Activated B cell treated with CpG ODN at 0.5 μM for 24 hours (primary cell): ENCODE measurements at regions of chr17 and their contacts with region 1.

Region 1: GRCh38 chr17:47009759-47010594 is 30.9 kb upstream of the RPRML start:
- DNase-seq: no peak
- ATAC-seq: no peak
- H3K4me3 Mint-ChIP-seq: no peak overlapping the region
- H3K27ac Mint-ChIP-seq: no peak overlapping the region
- H3K4me1 Mint-ChIP-seq: peaks cover 10% of the 10 kb centered on the region
- H3K27me3 Mint-ChIP-seq: no peaks in the 10 kb centered on the region
- CTCF ChIP-seq: no peak

Region 2: GRCh38 chr17:46964315-46965253 is 45.4 kb before region 1 on chr17:
- CTCF ChIA-PET with region 1: no interaction called
- POLR2A ChIA-PET with region 1: no interaction called
- intact Hi-C with region 1: no loop called
- DNase-seq: no peak
- ATAC-seq: no peak
- H3K4me3 Mint-ChIP-seq: no peak overlapping the region
- H3K27ac Mint-ChIP-seq: no peak overlapping the region
- H3K4me1 Mint-ChIP-seq: no peaks in the 10 kb centered on the region
- H3K27me3 Mint-ChIP-seq: peaks cover 1% of the 10 kb centered on the region
- CTCF ChIP-seq: no peak

Region 3: GRCh38 chr17:46995841-46996571 is 14.0 kb before region 1 on chr17:
- CTCF ChIA-PET with region 1: no interaction called
- POLR2A ChIA-PET with region 1: no interaction called
- intact Hi-C with region 1: loop called (anchors 1 kb)
- DNase-seq: no peak
- ATAC-seq: no peak
- H3K4me3 Mint-ChIP-seq: no peak overlapping the region
- H3K27ac Mint-ChIP-seq: no peak overlapping the region
- H3K4me1 Mint-ChIP-seq: peaks cover 34% of the 10 kb centered on the region
- H3K27me3 Mint-ChIP-seq: no peaks in the 10 kb centered on the region
- CTCF ChIP-seq: no peak

Region 4: DNA sequence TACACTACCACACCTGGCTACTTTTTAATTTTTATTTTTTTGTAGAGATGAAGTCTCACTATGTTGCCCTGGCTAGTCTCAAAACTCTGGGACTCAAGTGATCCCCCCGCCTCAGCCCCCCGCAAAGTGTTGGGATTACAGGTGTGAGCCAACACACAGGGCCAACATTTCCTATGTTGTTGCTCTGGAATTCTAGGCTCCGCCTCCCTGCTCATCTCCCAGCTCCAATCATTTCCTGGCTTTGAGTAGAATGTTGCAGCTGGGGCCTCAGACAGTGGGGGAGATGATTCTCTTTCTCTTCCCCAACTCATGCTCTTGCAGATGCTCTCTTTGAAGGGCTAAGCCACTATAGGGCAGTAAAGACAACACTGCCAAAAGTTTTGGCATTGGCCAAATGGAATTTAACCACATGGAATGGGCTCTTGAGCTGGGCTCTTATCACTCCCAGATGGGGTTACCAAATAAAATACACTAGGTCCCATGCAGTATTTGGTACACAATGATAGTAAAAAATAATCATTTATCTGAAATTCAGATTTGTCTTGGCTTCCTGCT is 294.1 kb after region 1 on chr17:
- CTCF ChIA-PET with region 1: no interaction called
- POLR2A ChIA-PET with region 1: interaction called, 10 read pairs
- intact Hi-C with region 1: no loop called
- DNase-seq: no peak
- ATAC-seq: no peak
- H3K4me3 Mint-ChIP-seq: no peak overlapping the region
- H3K27ac Mint-ChIP-seq: no peak overlapping the region
- H3K4me1 Mint-ChIP-seq: peaks cover 11% of the 10 kb centered on the region
- H3K27me3 Mint-ChIP-seq: no peaks in the 10 kb centered on the region
- CTCF ChIP-seq: no peak

Region 5: DNA sequence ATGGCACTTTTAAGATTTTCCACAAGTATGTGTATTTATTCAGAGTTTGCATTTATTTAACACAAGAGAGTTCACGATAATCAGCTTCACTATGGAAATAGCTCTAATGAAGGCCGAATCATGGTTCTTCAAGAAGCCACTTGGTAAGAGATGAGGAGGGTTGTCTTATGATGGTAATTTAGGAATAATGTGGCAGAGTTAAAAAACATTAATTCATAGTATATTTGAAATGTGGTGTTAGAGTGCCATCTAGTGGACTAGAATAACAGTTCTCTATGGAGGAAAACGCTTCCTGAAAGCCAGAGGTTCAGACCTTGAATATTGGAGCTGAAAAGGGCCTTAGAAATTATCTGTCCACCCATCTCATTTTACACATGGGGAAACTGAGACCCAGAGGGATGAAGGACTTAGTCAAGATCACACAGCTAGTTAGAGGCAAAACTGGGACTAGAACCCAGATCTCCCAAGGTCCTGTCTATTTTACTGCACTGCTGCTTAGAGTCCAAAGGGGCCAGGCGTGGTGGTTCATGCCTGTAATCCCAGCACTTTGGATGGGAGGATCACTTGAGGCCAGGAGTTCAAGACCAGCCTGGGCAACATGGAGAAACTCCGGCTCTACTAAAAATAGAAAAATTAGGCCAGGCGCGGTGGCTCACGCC is 605.9 kb after region 1 on chr17:
- CTCF ChIA-PET with region 1: no interaction called
- POLR2A ChIA-PET with region 1: no interaction called
- intact Hi-C with region 1: loop called (anchors 10 kb)
- DNase-seq: no peak
- ATAC-seq: peak; percentile 47
- H3K4me3 Mint-ChIP-seq: no peak overlapping the region
- H3K27ac Mint-ChIP-seq: no peak overlapping the region
- H3K4me1 Mint-ChIP-seq: no peaks in the 10 kb centered on the region
- H3K27me3 Mint-ChIP-seq: no peaks in the 10 kb centered on the region
- CTCF ChIP-seq: peak; percentile 60